Activated CD8-positive, alpha-beta memory T cell treated with anti-CD3 and anti-CD28 coated beads, Interleukin-2, amount 10 ng/mL, durations not matched to agents 7 days and 5 days (primary cell): ENCODE measurements at regions of chr9 and their contacts with region 1.

Region 1: DNA sequence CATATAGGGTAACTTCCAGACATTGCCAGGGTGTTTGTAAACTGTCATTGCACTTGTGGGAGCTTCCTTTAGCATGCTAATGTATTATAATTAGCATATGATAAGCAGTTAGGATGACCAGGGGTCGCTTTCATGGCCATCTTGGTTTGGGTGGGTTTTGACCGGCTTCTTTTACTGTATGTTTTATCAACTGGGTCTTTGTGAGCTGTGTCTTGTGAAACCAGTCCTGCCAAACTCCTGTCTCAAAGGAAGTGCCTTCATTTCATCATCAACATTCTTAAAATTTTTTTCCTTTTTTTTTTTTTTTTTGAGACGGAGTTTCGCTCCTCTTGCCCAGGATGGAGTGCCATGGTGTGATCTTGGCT is 11.9 kb upstream of the MELK start:
- DNase-seq: no peak
- ATAC-seq: no peak
- H3K4me3 Mint-ChIP-seq: no peak overlapping the region
- H3K27ac Mint-ChIP-seq: no peak overlapping the region
- H3K4me1 Mint-ChIP-seq: peaks cover under 1% of the 10 kb centered on the region
- H3K27me3 Mint-ChIP-seq: peaks cover 4% of the 10 kb centered on the region

Region 2: GRCh38 chr9:36436909-36437308 is 123.9 kb before region 1 on chr9:
- CTCF ChIA-PET with region 1: interaction called, 10 read pairs
- DNase-seq: no peak
- ATAC-seq: no peak
- H3K4me3 Mint-ChIP-seq: no peak overlapping the region
- H3K27ac Mint-ChIP-seq: no peak overlapping the region
- H3K4me1 Mint-ChIP-seq: peaks cover 5% of the 10 kb centered on the region
- H3K27me3 Mint-ChIP-seq: no peaks in the 10 kb centered on the region

Region 3: DNA sequence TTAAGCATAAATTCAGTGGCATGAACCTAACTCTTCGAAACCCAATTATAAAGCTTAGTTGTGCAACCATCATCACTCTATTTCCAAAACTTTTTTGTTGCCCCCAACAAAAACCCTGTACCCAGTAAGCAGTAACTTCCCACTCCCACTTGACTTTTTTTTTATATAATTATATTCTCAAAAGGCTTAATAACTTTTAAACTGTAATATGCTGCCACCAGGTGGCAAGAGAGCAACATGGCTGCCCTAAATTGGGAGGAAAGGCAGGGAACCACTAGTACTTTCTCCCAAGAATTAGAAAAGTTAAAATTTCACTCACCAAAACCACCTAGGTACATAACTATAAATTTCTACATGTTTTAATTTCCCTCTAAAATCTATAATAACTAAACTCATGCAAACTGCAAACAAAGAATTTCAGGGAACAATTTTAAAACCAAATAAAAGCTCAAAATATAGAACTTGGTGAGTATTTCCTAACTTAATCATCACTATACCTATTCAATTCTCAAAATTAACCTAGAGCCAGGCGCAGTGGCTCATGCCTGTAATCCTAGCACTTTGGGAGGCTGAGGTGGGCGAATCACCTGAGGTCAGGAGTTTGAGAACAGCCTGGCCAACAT is 110.6 kb before region 1 on chr9:
- CTCF ChIA-PET with region 1: interaction called, 17 read pairs
- DNase-seq: peak; percentile 44
- ATAC-seq: no peak
- H3K4me3 Mint-ChIP-seq: no peak overlapping the region
- H3K27ac Mint-ChIP-seq: no peak overlapping the region
- H3K4me1 Mint-ChIP-seq: peaks cover 18% of the 10 kb centered on the region
- H3K27me3 Mint-ChIP-seq: no peaks in the 10 kb centered on the region

Region 4: GRCh38 chr9:36530224-36530623 is 30.6 kb before region 1 on chr9:
- CTCF ChIA-PET with region 1: no interaction called
- DNase-seq: no peak
- ATAC-seq: no peak
- H3K4me3 Mint-ChIP-seq: no peak overlapping the region
- H3K27ac Mint-ChIP-seq: no peak overlapping the region
- H3K4me1 Mint-ChIP-seq: no peaks in the 10 kb centered on the region
- H3K27me3 Mint-ChIP-seq: peaks cover 16% of the 10 kb centered on the region